ENCODE measurements at regions of chr2 and their contacts with region 1.

Region 1: GRCh38 chr2:191677646-191678436 is at the start of gene NABP1:
- DNase-seq: peak; percentile 98
- ATAC-seq: peak; percentile 84
- H3K4me3 Mint-ChIP-seq: peak within 1 kb of the TSS; percentile 97
- H3K27ac Mint-ChIP-seq: peak within 1 kb of the TSS; percentile 99
- H3K4me1 Mint-ChIP-seq: peaks cover 64% of the 10 kb centered on the region
- H3K27me3 Mint-ChIP-seq: no peaks in the 10 kb centered on the region
- CTCF ChIP-seq: no peak
- total RNA-seq, gene NABP1: 69.6 and 86.0 TPM in 2 replicates

Region 2: GRCh38 chr2:190408538-190409271 is 1269.1 kb before region 1 on chr2:
- CTCF ChIA-PET with region 1: no interaction called
- POLR2A ChIA-PET with region 1: interaction called, 3 read pairs
- intact Hi-C with region 1: loop called (anchors 5 kb)
- DNase-seq: no peak
- ATAC-seq: peak; percentile 55
- H3K4me3 Mint-ChIP-seq: peak overlapping the region; percentile 84
- H3K27ac Mint-ChIP-seq: peak overlapping the region; percentile 86
- H3K4me1 Mint-ChIP-seq: peaks cover 26% of the 10 kb centered on the region
- H3K27me3 Mint-ChIP-seq: no peaks in the 10 kb centered on the region
- CTCF ChIP-seq: no peak

Region 3: DNA sequence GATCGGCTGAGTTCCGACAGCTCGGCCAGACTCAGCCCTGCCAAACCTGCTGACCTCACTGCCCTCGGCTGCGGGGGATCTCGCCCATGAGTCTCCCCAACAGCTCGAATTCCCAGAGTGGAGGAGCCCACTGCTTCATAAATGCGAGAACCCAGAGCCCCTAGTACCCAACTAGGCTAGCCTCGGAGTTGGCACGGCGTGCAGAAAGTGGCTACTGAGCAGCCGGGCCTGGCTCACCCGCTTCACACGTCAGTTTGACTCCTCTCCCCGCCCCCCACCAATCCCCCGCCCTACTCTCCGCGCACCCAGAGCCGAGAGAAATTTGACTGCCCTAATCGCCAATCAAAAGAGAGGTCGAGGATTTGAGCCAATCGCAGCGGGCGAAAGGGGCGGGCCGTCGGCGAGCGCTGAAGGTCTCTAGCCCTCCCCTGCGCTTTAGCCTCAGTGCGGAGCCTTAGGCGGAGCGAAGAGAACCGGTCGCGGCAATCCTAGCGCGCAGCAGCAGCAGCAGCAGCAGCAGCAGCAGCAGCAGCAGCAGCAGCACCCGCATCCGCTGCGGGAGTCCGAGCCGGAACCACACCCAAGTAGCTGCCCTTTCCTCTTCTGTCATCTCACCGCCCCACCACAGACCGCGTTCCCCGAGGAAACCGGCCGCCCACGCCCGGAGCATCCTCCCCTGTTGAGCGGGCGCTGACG is 797.3 kb before region 1 on chr2 and contains the start of gene GLS:
- CTCF ChIA-PET with region 1: no interaction called
- POLR2A ChIA-PET with region 1: interaction called, 8 read pairs
- intact Hi-C with region 1: loop called (anchors 1 kb)
- DNase-seq: peak; percentile 90
- ATAC-seq: peak; percentile 82
- H3K4me3 Mint-ChIP-seq: peak within 1 kb of the TSS; percentile 97
- H3K27ac Mint-ChIP-seq: peak within 1 kb of the TSS; percentile 97
- H3K4me1 Mint-ChIP-seq: peaks cover 44% of the 10 kb centered on the region
- H3K27me3 Mint-ChIP-seq: no peaks in the 10 kb centered on the region
- CTCF ChIP-seq: no peak
- total RNA-seq, gene GLS: 212 and 255 TPM in 2 replicates

Region 4: DNA sequence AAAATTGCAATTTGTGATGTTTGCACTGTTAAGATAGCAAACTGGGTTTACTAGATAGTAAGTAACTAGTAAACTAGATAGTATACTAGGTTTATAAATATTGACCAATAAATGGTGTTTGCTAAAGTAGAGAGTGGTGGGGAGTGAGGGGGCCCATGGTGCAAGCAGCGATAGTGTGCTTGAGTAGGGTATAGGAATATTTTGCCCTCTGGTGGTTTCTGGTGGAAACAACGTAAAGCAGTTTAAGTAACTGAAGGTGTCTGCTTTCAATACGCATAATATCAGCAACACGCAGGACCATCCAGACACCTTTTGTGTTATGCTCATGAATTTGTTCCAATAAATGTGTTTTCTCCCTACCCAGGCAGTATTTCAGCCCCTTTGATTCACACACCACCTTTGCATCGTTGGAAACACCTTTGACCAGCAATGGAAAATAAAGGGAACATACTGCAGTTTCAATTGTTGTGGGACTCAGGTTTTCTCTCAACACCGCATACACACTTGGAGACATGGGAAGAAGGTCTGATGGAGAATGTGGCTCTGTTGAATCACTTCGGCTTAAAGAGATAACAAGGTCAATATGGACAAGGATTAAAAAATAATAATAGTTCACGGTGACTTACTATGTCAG is 647.2 kb before region 1 on chr2:
- CTCF ChIA-PET with region 1: no interaction called
- POLR2A ChIA-PET with region 1: no interaction called
- intact Hi-C with region 1: no loop called
- DNase-seq: no peak
- ATAC-seq: peak; percentile 88
- H3K4me3 Mint-ChIP-seq: no peak overlapping the region
- H3K27ac Mint-ChIP-seq: no peak overlapping the region
- H3K4me1 Mint-ChIP-seq: peaks cover 6% of the 10 kb centered on the region
- H3K27me3 Mint-ChIP-seq: no peaks in the 10 kb centered on the region
- CTCF ChIP-seq: no peak

Region 5: GRCh38 chr2:191566344-191566743 is 111.5 kb before region 1 on chr2:
- CTCF ChIA-PET with region 1: interaction called, 9 read pairs
- POLR2A ChIA-PET with region 1: interaction called, 62 read pairs
- intact Hi-C with region 1: loop called (anchors 1 kb)
- DNase-seq: peak; percentile 36
- ATAC-seq: peak; percentile 77
- H3K4me3 Mint-ChIP-seq: no peak overlapping the region
- H3K27ac Mint-ChIP-seq: no peak overlapping the region
- H3K4me1 Mint-ChIP-seq: peaks cover 12% of the 10 kb centered on the region
- H3K27me3 Mint-ChIP-seq: peaks cover 10% of the 10 kb centered on the region
- CTCF ChIP-seq: peak; percentile 54

Region 6: DNA sequence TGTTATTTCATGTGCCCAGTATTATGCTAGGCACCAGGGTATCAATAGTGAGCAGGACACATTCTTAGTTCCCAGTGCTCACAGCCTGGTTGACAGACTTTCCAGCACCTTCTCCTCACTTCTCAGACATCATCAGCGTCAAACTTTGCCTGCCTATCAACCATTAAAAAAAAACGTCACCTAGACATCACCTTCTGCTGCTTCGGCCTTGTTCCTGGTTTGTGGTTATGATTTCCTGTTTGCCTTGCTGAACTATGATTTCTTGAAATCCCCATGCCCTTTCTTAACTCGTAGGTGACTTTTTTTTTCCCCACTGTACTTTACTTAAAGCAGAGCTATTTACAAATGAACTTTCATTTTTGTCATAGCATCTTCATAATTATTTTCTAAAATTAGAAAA is 60.3 kb before region 1 on chr2:
- CTCF ChIA-PET with region 1: interaction called, 17 read pairs
- POLR2A ChIA-PET with region 1: interaction called, 380 read pairs
- intact Hi-C with region 1: loop called (anchors 1 kb)
- DNase-seq: peak; percentile 19
- ATAC-seq: peak; percentile 90
- H3K4me3 Mint-ChIP-seq: peak overlapping the region; percentile 56
- H3K27ac Mint-ChIP-seq: peak overlapping the region; percentile 86
- H3K4me1 Mint-ChIP-seq: peaks cover 53% of the 10 kb centered on the region
- H3K27me3 Mint-ChIP-seq: no peaks in the 10 kb centered on the region
- CTCF ChIP-seq: no peak

Region 7: GRCh38 chr2:191656391-191656790 is 21.4 kb before region 1 on chr2:
- CTCF ChIA-PET with region 1: no interaction called
- POLR2A ChIA-PET with region 1: interaction called, 32 read pairs
- intact Hi-C with region 1: loop called (anchors 1 kb)
- DNase-seq: no peak
- ATAC-seq: no peak
- H3K4me3 Mint-ChIP-seq: no peak overlapping the region
- H3K27ac Mint-ChIP-seq: no peak overlapping the region
- H3K4me1 Mint-ChIP-seq: peaks cover 5% of the 10 kb centered on the region
- H3K27me3 Mint-ChIP-seq: no peaks in the 10 kb centered on the region
- CTCF ChIP-seq: no peak